Testis (tissue), 5 donors: ENCODE measurements at regions of chr7 and their contacts with region 1.

Region 1: DNA sequence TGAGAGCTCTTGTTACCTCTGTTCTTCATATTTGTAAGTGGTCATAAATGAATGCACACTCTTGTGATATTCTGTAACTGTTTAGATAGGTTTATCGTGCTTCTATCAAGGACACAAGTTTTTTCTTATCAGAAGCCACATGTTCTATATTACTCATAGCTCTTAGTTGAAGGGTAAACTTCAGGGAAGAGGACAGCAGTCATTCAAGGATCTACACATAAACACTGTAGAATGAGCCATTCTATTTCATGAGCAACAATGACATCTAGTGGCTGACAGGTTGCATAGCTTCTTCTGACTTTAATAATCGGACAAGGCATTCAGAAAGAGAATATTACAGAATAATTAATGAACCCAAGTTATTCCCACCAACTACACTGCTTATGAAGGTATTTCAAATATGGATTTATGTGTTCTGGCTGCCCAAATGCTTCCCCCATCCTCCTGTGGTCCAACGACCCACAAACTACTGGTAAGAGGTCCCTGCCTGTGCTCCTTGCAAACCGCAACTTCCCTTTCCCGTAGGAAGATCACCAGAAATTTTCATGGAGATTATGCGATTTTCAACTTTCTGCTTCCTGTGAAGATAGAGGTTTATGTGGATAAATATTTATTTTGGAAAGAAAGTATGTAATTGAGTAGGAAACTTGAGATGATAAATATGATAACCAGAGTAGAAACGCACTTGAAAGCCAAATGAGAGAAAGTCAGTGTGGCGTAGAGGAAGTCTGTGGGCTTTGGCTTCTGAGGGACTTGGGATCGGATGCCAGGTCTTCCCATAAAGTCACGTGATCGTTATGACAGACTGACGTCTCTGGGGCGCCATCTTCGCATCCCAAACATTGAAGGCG is 16.8 kb upstream of the ABCB5 start:
- DNase-seq: no peak
- H3K4me3 ChIP-seq: peak overlapping the region in 1 of 2 donors; percentile 9
- H3K27ac ChIP-seq: no peak overlapping the region
- H3K4me1 ChIP-seq: peaks cover 5% of the 10 kb centered on the region
- H3K27me3 ChIP-seq: no peaks in the 10 kb centered on the region
- CTCF ChIP-seq: peak; percentile 79 to 84 (median 81)
- POLR2A ChIP-seq: no peak

Region 2: GRCh38 chr7:19713676-19714075 is 885.0 kb before region 1 on chr7:
- intact Hi-C with region 1: loop called (anchors 10 kb)
- DNase-seq: peak; percentile 55
- H3K4me3 ChIP-seq: no peak overlapping the region
- H3K27ac ChIP-seq: no peak overlapping the region
- H3K4me1 ChIP-seq: peaks cover 4% of the 10 kb centered on the region
- H3K27me3 ChIP-seq: no peaks in the 10 kb centered on the region
- CTCF ChIP-seq: peak; percentile 32 to 64 (median 60)
- POLR2A ChIP-seq: no peak